AG04449 (cell line): ENCODE measurements at regions of chr3 and their contacts with region 1.

Region 1: GRCh38 chr3:172750368-172751174 is at the start of gene ECT2:
- DNase-seq: peak; percentile 97
- H3K4me3 ChIP-seq: peak within 1 kb of the TSS; percentile 90
- CTCF ChIP-seq: peak; percentile 82

Region 2: GRCh38 chr3:172710664-172711453 is 39.7 kb before region 1 on chr3 and contains the start of gene NCEH1:
- CTCF ChIA-PET with region 1: interaction called, 10 read pairs
- POLR2A ChIA-PET with region 1: interaction called, 14 read pairs
- DNase-seq: peak; percentile 94
- H3K4me3 ChIP-seq: peak within 1 kb of the TSS; percentile 94
- CTCF ChIP-seq: peak; percentile 82

Region 3: DNA sequence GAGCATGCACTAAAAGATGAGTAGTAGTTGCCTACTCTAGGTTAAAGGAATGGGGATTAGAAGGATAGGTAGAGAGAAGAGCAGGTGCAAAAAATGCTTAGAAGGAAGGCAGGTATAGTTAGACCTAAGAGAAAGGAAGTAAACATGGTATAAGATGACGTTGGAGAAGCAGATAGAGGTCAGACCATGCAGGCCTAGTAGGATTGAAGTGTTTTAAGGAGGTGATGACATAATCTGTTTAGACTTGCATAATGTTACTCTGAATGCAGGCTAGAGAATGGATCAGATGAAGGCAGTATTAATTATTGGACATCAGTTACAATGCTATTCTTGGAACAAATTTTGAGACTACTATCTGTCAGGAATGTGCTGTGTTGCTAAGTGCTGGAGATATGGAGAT is 11.1 kb before region 1 on chr3:
- CTCF ChIA-PET with region 1: interaction called, 10 read pairs
- POLR2A ChIA-PET with region 1: no interaction called
- DNase-seq: no peak
- H3K4me3 ChIP-seq: no peak overlapping the region
- CTCF ChIP-seq: no peak

Region 4: DNA sequence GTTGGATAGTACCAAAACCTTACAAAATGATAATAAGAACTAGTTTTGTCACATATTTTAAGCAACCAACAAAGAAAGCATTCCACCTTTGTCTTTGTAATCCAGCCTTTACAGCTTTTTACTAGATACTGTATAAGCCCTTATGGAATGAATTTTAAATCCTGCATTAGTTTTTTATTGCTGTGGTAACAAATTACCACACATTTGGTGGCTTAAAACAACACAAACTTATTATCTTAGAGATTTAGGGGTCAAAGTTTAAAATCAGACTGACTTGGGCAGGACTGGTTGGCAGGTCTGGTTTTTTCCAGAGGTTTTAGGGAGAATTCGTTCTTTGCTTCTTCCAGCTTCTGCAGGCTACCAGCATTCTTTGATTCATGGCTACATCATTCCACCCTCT is 538.5 kb after region 1 on chr3:
- CTCF ChIA-PET with region 1: no interaction called
- POLR2A ChIA-PET with region 1: no interaction called
- DNase-seq: no peak
- H3K4me3 ChIP-seq: no peak overlapping the region
- CTCF ChIP-seq: no peak